GM12878 (cell line): ENCODE measurements at regions of chr13 and their contacts with region 1.

Region 1: GRCh38 chr13:39516096-39516495 is 86.9 kb downstream of the LHFPL6 start:
- DNase-seq: no peak
- ATAC-seq: no peak
- H3K4me3 ChIP-seq: no peak overlapping the region
- H3K27ac ChIP-seq: no peak overlapping the region
- H3K4me1 ChIP-seq: no peaks in the 10 kb centered on the region
- H3K27me3 ChIP-seq: no peaks in the 10 kb centered on the region; a peak in 2 of 4 replicates
- CTCF ChIP-seq: no peak
- EP300 ChIP-seq: no peak
- POLR2A ChIP-seq: no peak
- RAD21 ChIP-seq: no peak

Region 2: DNA sequence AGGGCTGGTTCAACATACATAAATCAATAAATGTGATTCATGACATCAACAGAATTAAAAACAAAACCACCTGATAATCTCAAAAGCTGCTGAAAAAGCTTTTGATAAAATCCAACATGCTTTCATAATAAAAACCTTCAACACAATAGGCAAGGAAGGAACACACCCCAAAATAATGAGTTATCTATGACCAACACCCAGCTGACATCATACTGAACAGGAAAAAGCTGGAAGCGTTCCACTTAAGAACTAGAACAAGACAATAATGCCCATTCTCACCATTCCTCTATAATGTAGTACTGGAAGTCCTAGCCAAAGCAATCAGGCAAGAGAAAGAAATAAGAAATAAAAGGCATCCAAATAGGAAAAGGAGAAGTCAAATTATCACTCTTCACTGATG is 945.4 kb before region 1 on chr13:
- CTCF ChIA-PET with region 1: no interaction called
- POLR2A ChIA-PET with region 1: no interaction called
- RAD21 ChIA-PET with region 1: no interaction called
- SMC1A ChIA-PET with region 1: no interaction called
- in situ Hi-C with region 1: no loop called
- intact Hi-C with region 1: no loop called
- DNase-seq: no peak
- ATAC-seq: no peak
- H3K4me3 ChIP-seq: no peak overlapping the region
- H3K27ac ChIP-seq: no peak overlapping the region
- H3K4me1 ChIP-seq: no peaks in the 10 kb centered on the region
- H3K27me3 ChIP-seq: no peaks in the 10 kb centered on the region
- CTCF ChIP-seq: no peak
- EP300 ChIP-seq: no peak
- POLR2A ChIP-seq: no peak
- RAD21 ChIP-seq: no peak

Region 3: GRCh38 chr13:39501702-39502324 is 14.3 kb before region 1 on chr13:
- CTCF ChIA-PET with region 1: interaction called, 4 read pairs
- POLR2A ChIA-PET with region 1: interaction called, 7 read pairs
- RAD21 ChIA-PET with region 1: no interaction called
- SMC1A ChIA-PET with region 1: interaction called, 10 read pairs
- in situ Hi-C with region 1: no loop called
- intact Hi-C with region 1: no loop called
- DNase-seq: no peak
- ATAC-seq: 0 out of 3 replicates have a peak, but pooled peaks have one; percentile 14
- H3K4me3 ChIP-seq: no peak overlapping the region
- H3K27ac ChIP-seq: no peak overlapping the region
- H3K4me1 ChIP-seq: no peaks in the 10 kb centered on the region
- H3K27me3 ChIP-seq: no peaks in the 10 kb centered on the region; a peak in 1 of 4 replicates
- CTCF ChIP-seq: no peak
- EP300 ChIP-seq: no peak
- POLR2A ChIP-seq: no peak
- RAD21 ChIP-seq: no peak

Region 4: DNA sequence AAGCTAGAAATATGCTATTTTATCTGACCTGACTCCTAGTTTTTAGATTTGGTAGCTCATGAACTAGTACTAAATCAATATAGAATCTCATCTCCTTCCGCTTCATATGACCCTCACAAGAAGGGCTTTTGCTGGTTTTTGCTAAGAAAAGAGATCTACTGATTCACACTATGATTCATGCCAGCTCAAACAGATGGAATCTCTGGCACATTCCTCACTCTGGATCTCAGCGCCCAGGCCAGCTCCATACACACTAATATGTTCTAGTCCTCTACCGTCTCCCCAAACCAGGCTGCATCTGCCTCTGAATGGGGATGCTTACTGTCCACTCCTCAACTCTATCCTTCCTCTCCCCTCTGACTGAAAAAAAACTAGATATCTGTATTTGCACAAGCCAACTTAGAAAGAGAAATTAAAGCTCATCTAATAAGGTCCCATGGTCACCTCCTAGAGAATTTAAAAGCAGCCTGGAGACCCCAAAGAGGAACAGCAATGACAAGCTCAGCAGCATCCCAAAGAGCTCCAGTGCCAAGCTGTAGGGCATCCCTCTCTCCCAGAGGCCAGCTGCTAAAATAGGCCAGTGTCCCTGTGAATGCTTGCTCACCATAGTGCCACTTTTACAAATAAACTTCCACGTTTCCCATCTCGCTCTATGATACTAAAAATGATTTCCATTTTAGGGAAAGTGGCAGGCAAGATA is 12.0 kb after region 1 on chr13:
- CTCF ChIA-PET with region 1: interaction called, 6 read pairs
- POLR2A ChIA-PET with region 1: interaction called, 4 read pairs
- RAD21 ChIA-PET with region 1: no interaction called
- SMC1A ChIA-PET with region 1: interaction called, 15 read pairs
- in situ Hi-C with region 1: no loop called
- intact Hi-C with region 1: no loop called
- DNase-seq: no peak
- ATAC-seq: no peak
- H3K4me3 ChIP-seq: no peak overlapping the region
- H3K27ac ChIP-seq: no peak overlapping the region
- H3K4me1 ChIP-seq: no peaks in the 10 kb centered on the region
- H3K27me3 ChIP-seq: no peaks in the 10 kb centered on the region
- CTCF ChIP-seq: no peak
- EP300 ChIP-seq: no peak
- POLR2A ChIP-seq: no peak
- RAD21 ChIP-seq: no peak